ENCODE measurements at regions of chr11 and their contacts with region 1.

Region 1: GRCh38 chr11:16862746-16863145 is 124.3 kb downstream of the C11orf58 start:
- DNase-seq: no peak
- H3K4me3 Mint-ChIP-seq: peak overlapping the region; percentile 66
- H3K27ac Mint-ChIP-seq: peak overlapping the region; percentile 53
- H3K4me1 Mint-ChIP-seq: peaks cover 41% of the 10 kb centered on the region
- H3K27me3 Mint-ChIP-seq: no peaks in the 10 kb centered on the region

Region 2: GRCh38 chr11:16825968-16826367 is 36.8 kb before region 1 on chr11:
- intact Hi-C with region 1: loop called (anchors 5 kb)
- DNase-seq: no peak
- H3K4me3 Mint-ChIP-seq: no peak overlapping the region
- H3K27ac Mint-ChIP-seq: no peak overlapping the region
- H3K4me1 Mint-ChIP-seq: peaks cover 18% of the 10 kb centered on the region
- H3K27me3 Mint-ChIP-seq: no peaks in the 10 kb centered on the region

Region 3: GRCh38 chr11:16873289-16873688 is 10.5 kb after region 1 on chr11:
- intact Hi-C with region 1: no loop called
- DNase-seq: no peak
- H3K4me3 Mint-ChIP-seq: no peak overlapping the region
- H3K27ac Mint-ChIP-seq: no peak overlapping the region
- H3K4me1 Mint-ChIP-seq: peaks cover 3% of the 10 kb centered on the region
- H3K27me3 Mint-ChIP-seq: no peaks in the 10 kb centered on the region